Aorta (tissue), 5 donors: ENCODE measurements at regions of chr5 and their contacts with region 1.

Region 1: GRCh38 chr5:17216176-17216973 is 1.1 kb upstream of the BASP1 start:
- DNase-seq: peak; percentile 86 to 90
- ATAC-seq: peak; percentile 77
- H3K4me3 ChIP-seq: no peak overlapping the region
- H3K27ac ChIP-seq: peak overlapping the region in 1 of 2 donors; percentile 13
- H3K4me1 ChIP-seq: no peaks in the 10 kb centered on the region
- H3K27me3 ChIP-seq: no peaks in the 10 kb centered on the region

Region 2: DNA sequence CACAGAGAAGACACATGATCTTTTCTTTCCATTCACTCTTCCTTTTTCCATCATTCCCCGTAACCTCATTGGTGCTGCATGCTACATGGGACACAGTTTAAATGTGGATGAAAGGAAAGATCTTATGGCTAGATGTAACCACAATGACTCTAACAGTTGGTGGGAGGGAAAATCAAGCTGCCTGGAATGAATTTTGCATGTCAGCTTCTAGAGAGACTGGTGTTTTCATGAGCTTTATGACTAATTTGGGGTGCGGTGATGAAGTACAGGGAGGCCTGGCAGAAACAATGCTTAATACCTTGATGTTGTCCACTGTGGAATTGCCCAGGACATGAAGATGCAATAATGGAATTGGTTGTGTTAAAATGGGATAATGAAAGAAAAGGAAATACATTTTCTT is 224.4 kb before region 1 on chr5:
- intact Hi-C with region 1: no loop called
- DNase-seq: no peak
- ATAC-seq: no peak
- H3K4me3 ChIP-seq: no peak overlapping the region
- H3K27ac ChIP-seq: no peak overlapping the region
- H3K4me1 ChIP-seq: no peaks in the 10 kb centered on the region
- H3K27me3 ChIP-seq: no peaks in the 10 kb centered on the region

Region 3: GRCh38 chr5:17255471-17256021 is 39.2 kb after region 1 on chr5:
- intact Hi-C with region 1: no loop called
- DNase-seq: no peak
- ATAC-seq: no peak
- H3K4me3 ChIP-seq: no peak overlapping the region
- H3K27ac ChIP-seq: no peak overlapping the region
- H3K4me1 ChIP-seq: peaks cover 0 to 5% of the 10 kb centered on the region in 2 donors
- H3K27me3 ChIP-seq: no peaks in the 10 kb centered on the region

Region 4: DNA sequence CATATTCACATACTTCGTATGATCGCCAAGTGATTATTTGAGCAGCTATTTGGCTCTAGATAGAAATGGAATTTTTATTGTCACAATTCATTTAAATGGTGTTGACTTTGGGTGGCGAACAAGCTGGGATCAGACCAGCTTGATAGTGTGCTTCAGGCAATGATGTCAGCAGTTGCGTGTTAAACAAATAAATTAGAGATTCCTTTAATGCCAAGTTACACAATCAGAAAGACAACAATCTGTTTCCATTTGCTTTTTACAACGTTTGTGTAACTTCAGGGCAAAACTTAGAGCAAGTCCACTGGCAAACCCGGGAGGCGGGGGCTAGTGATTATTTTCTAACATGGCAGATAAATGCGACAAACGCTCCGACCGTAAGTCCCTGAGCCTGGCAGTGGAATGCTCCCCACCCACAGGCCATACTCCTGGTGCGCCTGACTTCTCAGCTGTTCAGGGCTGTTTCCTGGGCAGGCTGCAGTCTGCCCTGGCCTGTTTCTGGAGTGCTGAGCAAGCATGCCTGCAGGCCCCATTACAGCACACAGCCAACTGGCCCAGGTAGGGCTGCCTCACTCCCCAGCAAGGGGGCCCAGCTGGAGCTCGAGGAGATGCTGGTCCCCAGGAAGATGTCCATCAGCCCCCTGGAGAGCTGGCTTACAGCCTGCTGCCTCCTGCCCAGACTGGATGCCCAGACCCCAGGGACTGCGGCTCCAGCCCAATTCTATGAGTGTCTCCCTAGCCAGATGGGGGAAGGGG is 89.8 kb after region 1 on chr5:
- intact Hi-C with region 1: loop called (anchors 2 to 10 kb)
- DNase-seq: peak; percentile 77 to 79
- ATAC-seq: peak; percentile 80
- H3K4me3 ChIP-seq: no peak overlapping the region
- H3K27ac ChIP-seq: peak overlapping the region in 1 of 2 donors; percentile 25
- H3K4me1 ChIP-seq: peaks cover 0 to 3% of the 10 kb centered on the region in 2 donors
- H3K27me3 ChIP-seq: no peaks in the 10 kb centered on the region

Region 5: DNA sequence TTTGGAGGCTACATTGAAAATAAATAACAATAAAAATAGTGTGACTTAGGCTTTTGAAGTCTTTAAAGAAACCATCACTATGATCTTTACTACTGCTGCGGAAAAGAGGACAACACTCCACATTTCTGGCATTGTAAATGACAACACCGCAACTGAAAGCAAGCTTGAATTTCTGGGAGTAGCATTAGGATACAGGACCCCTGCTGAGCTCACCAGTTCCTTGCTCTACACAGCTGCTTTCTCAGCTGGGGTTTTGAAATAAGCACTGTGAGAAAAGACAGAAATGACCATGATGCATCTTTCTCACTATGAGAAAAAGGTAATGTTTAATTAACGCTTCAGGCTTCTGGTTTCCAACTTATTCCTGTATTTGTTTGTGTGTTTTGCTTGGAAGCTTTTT is 585.9 kb after region 1 on chr5:
- intact Hi-C with region 1: loop called in 1 of 2 experiments (anchors 10 kb)
- DNase-seq: no peak
- ATAC-seq: no peak
- H3K4me3 ChIP-seq: no peak overlapping the region
- H3K27ac ChIP-seq: no peak overlapping the region
- H3K4me1 ChIP-seq: no peaks in the 10 kb centered on the region
- H3K27me3 ChIP-seq: no peaks in the 10 kb centered on the region

Region 6: DNA sequence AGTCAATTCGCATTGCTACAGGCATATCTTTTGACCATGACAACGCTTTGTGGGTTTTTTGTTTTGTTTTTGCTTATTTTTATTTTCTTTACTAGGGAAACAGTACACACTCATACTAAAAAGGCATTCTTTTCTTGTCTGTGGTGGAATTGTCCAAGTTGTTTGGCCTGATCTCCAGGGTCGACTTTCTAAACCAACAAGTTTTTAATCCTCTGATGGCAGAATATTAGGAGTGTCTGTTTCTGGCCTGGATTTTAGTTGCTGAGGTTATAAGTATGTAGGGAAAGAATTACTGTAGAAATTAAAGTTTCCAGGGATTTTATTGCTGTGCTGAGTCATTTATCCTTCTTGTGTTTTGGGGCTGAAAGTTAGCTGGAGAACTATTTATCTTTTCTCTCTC is 636.4 kb after region 1 on chr5:
- intact Hi-C with region 1: no loop called
- DNase-seq: no peak
- ATAC-seq: no peak
- H3K4me3 ChIP-seq: no peak overlapping the region
- H3K27ac ChIP-seq: no peak overlapping the region
- H3K4me1 ChIP-seq: no peaks in the 10 kb centered on the region
- H3K27me3 ChIP-seq: no peaks in the 10 kb centered on the region

Region 7: DNA sequence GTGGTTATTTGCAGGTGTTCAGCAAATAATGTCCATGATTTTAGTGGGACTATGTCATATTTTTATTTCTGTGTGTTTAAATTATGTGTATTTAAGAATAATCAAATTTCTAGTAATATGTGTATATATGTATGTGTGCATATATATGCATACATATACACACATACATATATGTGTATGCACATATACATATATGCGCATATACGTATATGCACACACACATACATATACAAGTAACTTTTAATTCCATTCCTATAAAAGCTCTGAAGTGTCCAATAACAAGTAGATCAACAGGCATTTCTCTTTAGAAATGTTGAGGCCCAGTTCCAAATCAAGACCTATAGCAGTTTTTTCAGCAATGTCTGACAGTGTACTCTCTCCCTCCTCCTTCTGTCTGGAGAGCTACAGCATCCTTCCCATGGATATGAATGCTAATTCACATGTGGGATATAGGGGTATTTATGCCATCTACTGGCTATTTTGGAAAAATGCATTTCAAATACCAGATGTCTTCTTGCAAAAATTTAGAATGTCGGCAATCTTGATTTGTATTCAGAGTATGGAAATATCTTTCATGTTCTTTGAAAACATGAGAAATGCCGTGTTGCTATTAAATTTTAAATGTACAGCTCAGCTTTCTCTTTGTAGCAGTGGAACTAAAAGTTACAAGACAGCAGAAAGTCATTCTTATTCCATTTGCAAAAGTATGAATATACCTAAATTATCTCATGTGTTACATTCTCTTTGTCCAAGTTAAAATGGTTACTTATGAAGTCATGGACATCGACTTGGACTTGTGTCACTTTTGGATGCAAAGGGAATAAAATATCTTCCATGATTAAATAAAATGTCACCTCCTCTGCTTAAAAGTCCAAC is 1065.5 kb after region 1 on chr5:
- intact Hi-C with region 1: loop called in 1 of 2 experiments (anchors 10 kb)
- DNase-seq: no peak
- ATAC-seq: no peak
- H3K4me3 ChIP-seq: no peak overlapping the region
- H3K27ac ChIP-seq: no peak overlapping the region
- H3K4me1 ChIP-seq: no peaks in the 10 kb centered on the region
- H3K27me3 ChIP-seq: no peaks in the 10 kb centered on the region

Region 8: GRCh38 chr5:18314192-18314778 is 1097.9 kb after region 1 on chr5:
- intact Hi-C with region 1: loop called (anchors 5 to 10 kb)
- DNase-seq: no peak
- ATAC-seq: no peak
- H3K4me3 ChIP-seq: no peak overlapping the region
- H3K27ac ChIP-seq: no peak overlapping the region
- H3K4me1 ChIP-seq: no peaks in the 10 kb centered on the region
- H3K27me3 ChIP-seq: no peaks in the 10 kb centered on the region